Endothelial cell of umbilical vein (primary cell): ENCODE measurements at regions of chr3 and their contacts with region 1.

Region 1: DNA sequence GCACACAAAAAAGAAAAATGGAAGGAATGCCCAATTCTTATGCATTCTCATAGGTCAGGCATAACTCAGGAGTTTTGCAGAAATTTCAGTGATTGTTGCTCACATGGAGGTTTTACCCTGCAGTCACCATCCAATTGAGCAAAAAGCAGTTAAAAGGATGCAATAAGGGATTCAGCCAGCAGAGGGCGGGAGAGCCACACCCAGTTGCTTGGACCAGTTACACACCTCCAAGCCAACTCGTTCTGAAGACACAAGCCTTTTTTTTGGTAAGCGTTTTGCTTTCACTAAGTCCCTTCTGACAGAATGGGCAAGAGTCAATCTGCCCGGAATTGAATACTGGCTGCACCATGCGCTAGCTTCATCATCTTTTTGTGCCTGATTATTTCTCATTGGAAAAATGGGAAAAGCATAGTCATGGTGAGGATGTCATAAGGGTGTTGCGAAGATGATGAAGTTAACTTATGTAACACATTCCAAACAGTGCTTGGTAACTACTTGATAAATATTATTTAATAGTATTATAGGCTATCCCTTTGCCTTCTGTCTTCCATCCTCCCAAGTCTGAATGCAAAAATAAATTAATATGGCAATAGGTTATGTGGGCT is 154.4 kb upstream of the SGO1 start:
- DNase-seq: peak; percentile 84
- H3K4me3 ChIP-seq: no peak overlapping the region
- H3K27ac ChIP-seq: no peak overlapping the region
- H3K4me1 ChIP-seq: no peaks in the 10 kb centered on the region
- H3K27me3 ChIP-seq: no peaks in the 10 kb centered on the region
- CTCF ChIP-seq: peak; percentile 78 to 94
- POLR2A ChIP-seq: no peak

Region 2: DNA sequence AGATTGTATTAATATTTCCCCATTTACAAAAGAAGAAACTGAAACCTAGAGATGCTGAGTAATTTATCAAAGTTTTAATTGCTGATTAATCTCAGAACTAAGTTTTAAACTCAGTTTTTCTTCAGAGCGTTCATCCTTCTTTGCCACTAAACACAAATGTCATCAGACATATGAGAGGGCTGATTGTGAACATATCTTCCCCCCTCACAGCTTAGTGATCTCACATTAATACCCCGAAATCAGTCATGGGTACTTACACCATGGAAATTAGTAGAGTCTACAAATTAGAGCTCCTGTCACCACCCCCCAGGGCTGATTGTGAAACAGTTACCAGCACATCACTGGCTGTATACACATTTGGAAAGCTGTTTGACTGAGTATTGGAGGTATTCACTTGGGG is 34.9 kb after region 1 on chr3:
- CTCF ChIA-PET with region 1: no interaction called
- POLR2A ChIA-PET with region 1: no interaction called
- dilution Hi-C with region 1: no loop called
- intact Hi-C with region 1: no loop called
- DNase-seq: no peak
- H3K4me3 ChIP-seq: no peak overlapping the region
- H3K27ac ChIP-seq: no peak overlapping the region
- H3K4me1 ChIP-seq: no peaks in the 10 kb centered on the region
- H3K27me3 ChIP-seq: no peaks in the 10 kb centered on the region
- CTCF ChIP-seq: no peak
- POLR2A ChIP-seq: no peak

Region 3: GRCh38 chr3:20511863-20512505 is 171.6 kb after region 1 on chr3:
- CTCF ChIA-PET with region 1: no interaction called
- POLR2A ChIA-PET with region 1: no interaction called
- dilution Hi-C with region 1: no loop called
- intact Hi-C with region 1: loop called (anchors 1 kb)
- DNase-seq: peak; percentile 51
- H3K4me3 ChIP-seq: no peak overlapping the region
- H3K27ac ChIP-seq: no peak overlapping the region
- H3K4me1 ChIP-seq: no peaks in the 10 kb centered on the region
- H3K27me3 ChIP-seq: no peaks in the 10 kb centered on the region
- CTCF ChIP-seq: peak; percentile 35 to 40
- POLR2A ChIP-seq: no peak

Region 4: GRCh38 chr3:20739814-20740213 is 399.4 kb after region 1 on chr3:
- CTCF ChIA-PET with region 1: interaction called, 3 read pairs
- POLR2A ChIA-PET with region 1: no interaction called
- dilution Hi-C with region 1: no loop called
- intact Hi-C with region 1: loop called (anchors 2 kb)
- DNase-seq: peak; percentile 1
- H3K4me3 ChIP-seq: no peak overlapping the region
- H3K27ac ChIP-seq: no peak overlapping the region
- H3K4me1 ChIP-seq: no peaks in the 10 kb centered on the region
- H3K27me3 ChIP-seq: no peaks in the 10 kb centered on the region
- CTCF ChIP-seq: no peak
- POLR2A ChIP-seq: no peak

Region 5: GRCh38 chr3:21216598-21216997 is 876.2 kb after region 1 on chr3:
- CTCF ChIA-PET with region 1: no interaction called
- POLR2A ChIA-PET with region 1: no interaction called
- dilution Hi-C with region 1: no loop called
- intact Hi-C with region 1: loop called (anchors 1 kb)
- DNase-seq: no peak
- H3K4me3 ChIP-seq: no peak overlapping the region
- H3K27ac ChIP-seq: no peak overlapping the region
- H3K4me1 ChIP-seq: no peaks in the 10 kb centered on the region
- H3K27me3 ChIP-seq: no peaks in the 10 kb centered on the region
- CTCF ChIP-seq: no peak
- POLR2A ChIP-seq: no peak

Region 6: GRCh38 chr3:21484057-21484827 is 1143.8 kb after region 1 on chr3:
- CTCF ChIA-PET with region 1: interaction called, 9 read pairs
- POLR2A ChIA-PET with region 1: no interaction called
- dilution Hi-C with region 1: no loop called
- intact Hi-C with region 1: loop called (anchors 1 kb)
- DNase-seq: peak; percentile 61
- H3K4me3 ChIP-seq: no peak overlapping the region
- H3K27ac ChIP-seq: no peak overlapping the region
- H3K4me1 ChIP-seq: no peaks in the 10 kb centered on the region
- H3K27me3 ChIP-seq: no peaks in the 10 kb centered on the region
- CTCF ChIP-seq: peak; percentile 55 to 61
- POLR2A ChIP-seq: no peak

Region 7: GRCh38 chr3:22117751-22118346 is 1777.4 kb after region 1 on chr3:
- CTCF ChIA-PET with region 1: interaction called, 8 read pairs
- POLR2A ChIA-PET with region 1: no interaction called
- dilution Hi-C with region 1: no loop called
- intact Hi-C with region 1: loop called (anchors 2 kb)
- DNase-seq: peak; percentile 54
- H3K4me3 ChIP-seq: no peak overlapping the region
- H3K27ac ChIP-seq: no peak overlapping the region
- H3K4me1 ChIP-seq: peaks cover 5% of the 10 kb centered on the region
- H3K27me3 ChIP-seq: no peaks in the 10 kb centered on the region
- CTCF ChIP-seq: peak in 1 of 2 donors; percentile 21
- POLR2A ChIP-seq: no peak